MCF 10A (cell line): ENCODE measurements at regions of chr12 and their contacts with region 1.

Region 1: DNA sequence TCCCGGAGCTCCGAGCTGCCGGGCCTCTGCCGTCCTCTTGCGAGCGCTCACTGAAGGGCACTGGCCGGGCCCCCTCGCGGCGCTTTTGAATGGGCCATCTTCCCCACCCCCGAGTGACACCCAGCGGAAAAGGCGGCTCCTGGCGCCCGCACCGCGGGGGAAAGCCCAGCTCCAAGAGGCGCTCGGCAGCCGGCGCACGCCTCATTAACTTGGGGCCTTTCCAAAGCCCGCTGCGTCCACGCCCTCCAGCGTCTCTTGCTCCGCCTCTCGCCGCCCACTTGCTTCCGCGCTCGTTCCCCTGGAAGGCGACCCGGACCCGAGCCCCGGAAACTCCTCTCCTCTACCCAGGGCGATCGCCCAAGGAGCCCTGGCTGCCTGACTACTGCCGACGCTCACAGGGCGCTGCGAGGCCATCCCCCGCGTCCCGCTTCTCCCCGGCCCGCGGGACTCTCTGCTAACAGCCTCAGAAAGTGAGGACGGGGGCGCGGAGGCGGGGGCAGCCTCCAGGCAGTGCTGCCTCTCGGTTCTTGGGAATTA is at the start of gene PHLDA1:
- DNase-seq: peak; percentile 98
- H3K4me3 Mint-ChIP-seq: peak within 1 kb of the TSS; percentile 89
- H3K27ac Mint-ChIP-seq: peak within 1 kb of the TSS; percentile 96
- H3K4me1 Mint-ChIP-seq: peaks cover 29% of the 10 kb centered on the region
- H3K27me3 Mint-ChIP-seq: no peaks in the 10 kb centered on the region
- CTCF ChIP-seq: peak; percentile 71
- total RNA-seq, gene PHLDA1: 183 and 203 TPM in 2 replicates

Region 2: GRCh38 chr12:75560167-75560566 is 471.4 kb before region 1 on chr12:
- CTCF ChIA-PET with region 1: interaction called, 3 read pairs
- POLR2A ChIA-PET with region 1: interaction called, 5 read pairs
- intact Hi-C with region 1: loop called (anchors 2 kb)
- DNase-seq: peak; percentile 25
- H3K4me3 Mint-ChIP-seq: no peak overlapping the region
- H3K27ac Mint-ChIP-seq: no peak overlapping the region
- H3K4me1 Mint-ChIP-seq: peaks cover 6% of the 10 kb centered on the region
- H3K27me3 Mint-ChIP-seq: no peaks in the 10 kb centered on the region
- CTCF ChIP-seq: peak; percentile 18

Region 3: GRCh38 chr12:75658901-75659383 is 372.7 kb before region 1 on chr12:
- CTCF ChIA-PET with region 1: interaction called, 5 read pairs
- POLR2A ChIA-PET with region 1: interaction called, 21 read pairs
- intact Hi-C with region 1: no loop called
- DNase-seq: peak; percentile 61
- H3K4me3 Mint-ChIP-seq: peak overlapping the region; percentile 35
- H3K27ac Mint-ChIP-seq: no peak overlapping the region
- H3K4me1 Mint-ChIP-seq: peaks cover 26% of the 10 kb centered on the region
- H3K27me3 Mint-ChIP-seq: no peaks in the 10 kb centered on the region
- CTCF ChIP-seq: no peak

Region 4: GRCh38 chr12:75820848-75821578 is 210.6 kb before region 1 on chr12:
- CTCF ChIA-PET with region 1: interaction called, 21 read pairs
- POLR2A ChIA-PET with region 1: interaction called, 33 read pairs
- intact Hi-C with region 1: loop called (anchors 1 kb)
- DNase-seq: peak; percentile 84
- H3K4me3 Mint-ChIP-seq: no peak overlapping the region
- H3K27ac Mint-ChIP-seq: no peak overlapping the region
- H3K4me1 Mint-ChIP-seq: peaks cover 17% of the 10 kb centered on the region
- H3K27me3 Mint-ChIP-seq: no peaks in the 10 kb centered on the region
- CTCF ChIP-seq: peak; percentile 21

Region 5: GRCh38 chr12:75944097-75944904 is 87.3 kb before region 1 on chr12:
- CTCF ChIA-PET with region 1: no interaction called
- POLR2A ChIA-PET with region 1: interaction called, 20 read pairs
- intact Hi-C with region 1: no loop called
- DNase-seq: peak; percentile 78
- H3K4me3 Mint-ChIP-seq: peak overlapping the region; percentile 12
- H3K27ac Mint-ChIP-seq: peak overlapping the region; percentile 90
- H3K4me1 Mint-ChIP-seq: peaks cover 15% of the 10 kb centered on the region
- H3K27me3 Mint-ChIP-seq: no peaks in the 10 kb centered on the region
- CTCF ChIP-seq: no peak

Region 6: DNA sequence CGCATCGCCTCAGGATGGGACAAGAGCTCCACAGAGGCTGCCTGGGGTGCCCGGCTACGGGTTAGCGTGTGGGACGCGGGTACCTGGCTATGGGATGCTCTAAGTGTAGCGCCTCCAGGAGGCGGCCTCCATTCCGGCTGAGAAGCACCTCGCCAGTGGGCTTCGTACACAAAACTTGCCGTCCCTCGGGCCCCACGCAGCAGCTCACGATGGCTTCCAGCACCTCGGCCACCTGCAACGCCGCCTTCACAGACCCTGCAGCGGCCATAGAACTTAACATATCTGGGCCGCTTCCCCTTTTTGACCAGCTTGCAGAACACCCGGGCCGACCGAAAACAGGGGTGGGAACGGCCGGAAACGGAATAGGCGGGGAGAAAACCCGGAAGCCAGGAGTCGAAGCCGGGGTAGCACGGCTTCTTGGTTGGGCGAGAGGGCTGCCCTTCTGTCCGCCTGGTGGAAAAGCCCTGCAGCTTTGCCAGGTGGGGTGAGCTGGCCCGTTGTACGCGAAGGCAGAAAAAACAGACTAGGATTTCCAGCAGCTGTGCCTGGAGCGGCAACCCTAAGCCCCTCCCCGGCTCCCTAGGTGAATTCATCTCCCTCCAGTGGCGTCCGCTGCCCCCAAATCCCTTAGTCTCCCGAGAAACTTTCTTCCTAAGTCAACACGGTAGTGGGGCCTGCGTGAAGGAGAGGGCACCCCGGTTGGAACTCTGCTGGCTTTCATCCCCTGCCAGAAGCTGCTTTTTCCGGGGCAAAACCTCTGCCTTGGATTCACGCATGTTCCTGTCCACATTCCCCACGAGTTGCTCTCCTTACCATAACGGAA is 316.7 kb after region 1 on chr12 and contains the start of gene BBS10:
- CTCF ChIA-PET with region 1: interaction called, 5 read pairs
- POLR2A ChIA-PET with region 1: interaction called, 56 read pairs
- intact Hi-C with region 1: loop called (anchors 1 kb)
- DNase-seq: peak; percentile 92
- H3K4me3 Mint-ChIP-seq: peak within 1 kb of the TSS; percentile 86
- H3K27ac Mint-ChIP-seq: peak within 1 kb of the TSS; percentile 39
- H3K4me1 Mint-ChIP-seq: peaks cover 17% of the 10 kb centered on the region
- H3K27me3 Mint-ChIP-seq: no peaks in the 10 kb centered on the region
- CTCF ChIP-seq: peak; percentile 40
- total RNA-seq, gene BBS10: 5.9 and 10.2 TPM in 2 replicates